Transverse colon (tissue), 4 donors: ENCODE measurements at regions of chr6 and their contacts with region 1.

Region 1: GRCh38 chr6:153804755-153805330 is 234.2 kb upstream of the OPRM1 start:
- DNase-seq: no peak
- H3K4me3 ChIP-seq: no peak overlapping the region
- H3K27ac ChIP-seq: no peak overlapping the region
- H3K4me1 ChIP-seq: no peaks in the 10 kb centered on the region
- H3K27me3 ChIP-seq: no peaks in the 10 kb centered on the region
- CTCF ChIP-seq: no peak
- EP300 ChIP-seq: no peak
- POLR2A ChIP-seq: no peak

Region 2: GRCh38 chr6:153401754-153402153 is 403.1 kb before region 1 on chr6:
- in situ Hi-C with region 1: no loop called
- intact Hi-C with region 1: no loop called
- DNase-seq: no peak
- H3K4me3 ChIP-seq: no peak overlapping the region
- H3K27ac ChIP-seq: no peak overlapping the region
- H3K4me1 ChIP-seq: no peaks in the 10 kb centered on the region
- H3K27me3 ChIP-seq: no peaks in the 10 kb centered on the region
- CTCF ChIP-seq: no peak
- EP300 ChIP-seq: no peak
- POLR2A ChIP-seq: no peak

Region 3: GRCh38 chr6:153816366-153816765 is 11.5 kb after region 1 on chr6:
- in situ Hi-C with region 1: no loop called
- intact Hi-C with region 1: loop called (anchors 1 kb)
- DNase-seq: no peak
- H3K4me3 ChIP-seq: no peak overlapping the region
- H3K27ac ChIP-seq: no peak overlapping the region
- H3K4me1 ChIP-seq: no peaks in the 10 kb centered on the region
- H3K27me3 ChIP-seq: no peaks in the 10 kb centered on the region
- CTCF ChIP-seq: no peak
- EP300 ChIP-seq: no peak
- POLR2A ChIP-seq: no peak